Left ventricle myocardium superior (tissue), 1 donor: ENCODE measurements at regions of chr4 and their contacts with region 1.

Region 1: DNA sequence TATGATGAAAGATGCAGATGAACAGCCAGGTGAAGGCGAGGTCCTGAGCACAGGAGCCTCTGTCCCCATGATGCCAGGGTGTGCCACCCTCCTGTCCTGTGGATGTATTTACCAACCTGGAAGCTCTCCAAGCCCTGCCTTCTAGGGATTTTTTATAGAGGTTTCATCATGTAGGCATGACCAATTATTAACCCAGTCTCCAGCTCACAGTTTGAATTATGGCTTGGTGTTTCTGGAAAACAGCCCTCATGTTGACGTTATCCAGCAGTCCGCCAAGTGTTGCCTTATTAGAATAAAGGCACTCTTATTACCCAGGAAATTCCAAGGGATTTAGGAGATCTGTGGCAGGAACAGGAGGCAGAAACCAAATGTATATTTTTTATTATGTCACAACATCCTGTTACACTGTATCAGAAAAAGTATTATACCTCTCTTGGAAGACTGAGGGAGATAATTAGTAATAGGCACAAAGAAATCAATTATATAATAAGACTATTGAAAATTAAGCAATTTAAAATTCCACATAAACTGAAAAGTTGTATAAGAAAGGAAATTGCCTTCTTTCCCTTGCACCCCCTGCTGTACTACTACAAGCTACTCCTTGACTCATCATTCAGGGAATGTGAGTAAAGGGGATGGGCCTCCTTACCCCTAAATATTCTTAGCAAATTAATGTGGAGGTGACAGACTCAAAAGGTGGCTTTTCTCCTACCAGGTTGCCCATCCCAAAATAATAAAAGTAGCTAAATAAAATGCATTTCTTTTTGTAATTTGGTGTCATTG is 129.6 kb downstream of the ZNF330 start:
- DNase-seq: no peak
- ATAC-seq: no peak

Region 2: DNA sequence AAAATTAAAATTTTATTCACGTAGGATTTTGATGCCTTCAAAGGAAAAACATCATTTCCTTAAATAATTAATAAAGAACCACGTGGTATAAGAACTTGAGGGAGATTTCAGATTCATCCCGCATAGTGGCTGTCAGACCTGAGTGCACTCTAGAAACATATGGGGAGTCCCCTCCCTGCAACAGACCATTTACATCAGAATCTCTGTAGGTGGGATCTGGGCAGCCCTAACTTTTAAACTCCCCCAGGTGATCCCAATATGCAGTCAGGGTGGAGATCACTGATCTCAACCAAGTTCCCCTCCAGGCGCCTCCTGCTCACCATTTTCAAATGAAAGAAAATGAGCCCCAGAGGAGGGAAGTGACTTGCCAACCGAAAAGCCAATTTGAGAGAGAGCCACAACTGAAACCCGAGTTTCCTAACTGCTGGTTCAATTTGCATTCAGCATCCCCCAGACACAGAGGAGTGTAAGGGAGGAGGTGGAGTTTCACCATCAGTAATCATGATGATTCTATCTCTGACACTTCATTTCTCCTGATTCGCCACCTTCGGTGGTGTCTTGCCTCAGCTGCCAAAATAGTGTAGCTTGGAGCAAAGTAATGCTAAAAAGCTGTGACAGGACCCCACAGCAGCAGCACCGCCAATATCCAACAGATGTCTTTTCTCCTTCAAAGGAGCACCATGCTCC is 228.4 kb before region 1 on chr4:
- intact Hi-C with region 1: no loop called
- DNase-seq: no peak
- ATAC-seq: no peak

Region 3: DNA sequence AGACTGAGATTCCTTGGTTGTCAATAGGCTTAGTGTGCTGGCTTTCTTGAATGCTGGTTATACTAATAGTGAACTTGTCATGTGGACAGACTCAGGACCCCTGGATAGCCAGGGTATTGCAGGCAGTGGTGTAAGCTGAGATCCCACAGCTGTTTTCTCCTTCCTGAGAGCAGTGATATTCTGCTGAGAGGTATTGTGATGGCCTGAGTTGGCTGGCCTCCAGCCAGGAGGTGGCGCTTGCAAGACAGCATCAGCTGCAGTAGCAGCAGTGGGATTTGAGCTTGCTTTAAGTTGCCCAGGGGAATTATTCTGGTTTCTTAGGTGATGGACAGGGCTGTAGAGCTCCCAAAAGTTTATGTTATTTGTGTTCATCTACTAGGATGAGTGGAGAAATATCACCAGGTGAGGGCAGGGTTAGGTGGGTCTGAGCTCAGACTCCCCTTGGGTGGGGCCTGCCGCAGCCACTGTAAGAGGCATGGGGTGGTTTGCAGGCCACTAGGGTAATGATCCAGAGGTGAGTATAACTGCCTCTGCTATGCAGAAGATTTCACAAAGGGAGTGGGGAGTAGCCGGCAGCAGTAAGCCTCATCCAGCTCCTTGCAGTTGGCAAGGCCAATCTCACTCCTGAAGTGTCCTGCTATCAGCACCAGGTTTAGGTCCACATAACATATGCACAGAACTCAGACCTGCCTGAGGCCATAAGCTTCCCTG is 352.3 kb after region 1 on chr4:
- intact Hi-C with region 1: loop called (anchors 5 kb)
- DNase-seq: peak; percentile 58
- ATAC-seq: no peak